CD8-positive, alpha-beta T cell (primary cell): ENCODE measurements at regions of chr16 and their contacts with region 1.

Region 1: DNA sequence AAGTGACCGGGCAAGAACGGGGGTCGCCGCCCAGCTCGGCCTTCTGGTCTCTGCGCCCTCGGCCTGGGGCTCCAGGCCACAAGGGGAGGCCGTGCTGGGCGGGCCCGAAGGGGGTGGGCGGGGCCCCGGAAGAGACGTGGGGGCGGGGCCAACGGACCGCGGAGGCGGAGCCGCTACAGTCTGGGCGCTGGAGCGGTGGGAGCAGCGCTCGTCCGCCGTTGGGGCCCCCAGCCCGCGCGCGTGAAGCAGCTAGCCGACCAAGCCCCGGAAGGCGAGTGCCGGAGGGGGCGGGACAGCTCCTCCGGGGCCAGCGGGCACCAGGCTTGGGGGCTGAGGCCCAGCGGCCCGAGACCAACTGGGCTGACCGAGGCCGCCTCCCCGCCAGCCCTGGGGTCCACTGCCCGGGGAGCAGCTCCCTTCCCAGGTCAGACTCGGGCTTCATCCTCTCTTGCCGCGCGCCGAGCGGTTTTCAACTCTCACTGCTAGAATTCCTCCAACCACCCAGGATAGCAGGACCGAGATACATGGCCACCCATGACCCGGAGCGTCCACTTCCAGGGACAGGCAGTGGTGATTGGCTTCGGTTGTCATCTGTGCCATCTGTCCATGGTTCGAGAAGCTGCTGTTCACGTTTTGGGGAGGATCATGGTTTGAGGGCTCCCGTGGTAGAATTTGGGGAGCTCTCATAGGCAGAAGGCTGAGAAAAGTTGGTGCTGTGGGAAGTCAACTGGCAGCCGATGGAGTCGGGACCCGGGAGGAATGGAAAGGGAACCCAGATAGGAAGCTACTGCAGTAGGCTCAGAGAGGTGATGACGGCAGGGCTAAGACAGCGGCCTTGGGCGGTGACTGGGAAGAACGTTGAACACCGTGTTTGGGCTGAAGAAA is 44.6 kb upstream of the LCMT1 start:
- DNase-seq: peak; percentile 63 to 92 (median 82)
- ATAC-seq: peak; percentile 97
- H3K4me3 ChIP-seq: peak overlapping the region; percentile 65 to 70
- H3K4me3 Mint-ChIP-seq: peak overlapping the region; percentile 95
- H3K27ac ChIP-seq: peak overlapping the region; percentile 61 to 86
- H3K27ac Mint-ChIP-seq: peak overlapping the region; percentile 97
- H3K4me1 ChIP-seq: peaks cover 42% of the 10 kb centered on the region
- H3K4me1 Mint-ChIP-seq: peaks cover 59% of the 10 kb centered on the region
- H3K27me3 ChIP-seq: no peaks in the 10 kb centered on the region
- H3K27me3 Mint-ChIP-seq: no peaks in the 10 kb centered on the region
- CTCF ChIP-seq: no peak

Region 2: DNA sequence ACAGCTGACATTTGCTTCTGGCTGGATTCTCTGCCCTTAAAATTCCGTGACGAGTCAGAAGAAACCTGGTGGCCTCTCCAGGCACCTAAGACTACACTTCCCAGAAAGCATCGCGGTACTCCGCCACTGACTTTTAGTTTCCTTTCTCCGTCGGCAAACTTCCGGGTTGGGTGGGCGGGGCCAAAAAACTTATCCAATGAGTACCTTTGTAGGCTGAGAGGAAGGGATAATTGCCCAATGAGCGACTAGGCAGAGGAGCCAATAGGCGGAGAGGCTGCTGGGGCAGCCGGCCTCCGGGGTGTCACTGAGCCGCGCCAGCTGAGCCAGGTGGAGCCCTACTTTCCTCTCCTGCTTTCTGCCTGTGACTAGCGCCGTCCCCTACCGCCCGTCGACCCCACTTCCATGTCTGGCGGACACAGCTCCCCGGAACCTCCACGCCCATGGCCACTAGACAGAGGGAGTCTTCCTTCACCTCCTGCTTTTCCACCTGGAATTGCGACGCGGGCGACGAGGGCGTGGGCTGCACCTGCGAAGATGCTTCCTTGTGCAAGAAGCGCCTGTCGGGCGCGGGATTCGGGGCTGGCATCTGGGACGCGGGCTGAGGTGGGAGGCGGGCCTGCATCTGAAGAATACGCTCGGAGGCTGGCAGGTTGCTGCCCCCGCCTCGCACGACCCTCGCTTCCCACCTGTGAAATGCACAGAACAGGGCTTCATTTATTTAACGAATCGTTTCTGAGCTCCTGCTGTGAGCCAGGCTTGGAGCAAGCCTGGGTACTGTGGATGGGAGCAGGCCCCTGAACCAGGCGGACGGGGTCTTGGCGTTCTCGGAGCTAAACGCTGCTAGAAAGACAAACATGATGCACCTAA is 35.3 kb before region 1 on chr16:
- CTCF ChIA-PET with region 1: no interaction called
- POLR2A ChIA-PET with region 1: interaction called, 3 read pairs
- intact Hi-C with region 1: loop called (anchors 1 kb)
- DNase-seq: peak; percentile 79 to 97 (median 90)
- ATAC-seq: peak; percentile 99
- H3K4me3 ChIP-seq: peak overlapping the region; percentile 88 to 94
- H3K4me3 Mint-ChIP-seq: peak overlapping the region; percentile 96
- H3K27ac ChIP-seq: peak overlapping the region; percentile 65 to 68
- H3K27ac Mint-ChIP-seq: peak overlapping the region; percentile 94
- H3K4me1 ChIP-seq: peaks cover 14% of the 10 kb centered on the region
- H3K4me1 Mint-ChIP-seq: peaks cover 39% of the 10 kb centered on the region
- H3K27me3 ChIP-seq: no peaks in the 10 kb centered on the region
- H3K27me3 Mint-ChIP-seq: no peaks in the 10 kb centered on the region
- CTCF ChIP-seq: no peak